GM18951 (cell line): ENCODE measurements at regions of chr14 and their contacts with region 1.

Region 1: DNA sequence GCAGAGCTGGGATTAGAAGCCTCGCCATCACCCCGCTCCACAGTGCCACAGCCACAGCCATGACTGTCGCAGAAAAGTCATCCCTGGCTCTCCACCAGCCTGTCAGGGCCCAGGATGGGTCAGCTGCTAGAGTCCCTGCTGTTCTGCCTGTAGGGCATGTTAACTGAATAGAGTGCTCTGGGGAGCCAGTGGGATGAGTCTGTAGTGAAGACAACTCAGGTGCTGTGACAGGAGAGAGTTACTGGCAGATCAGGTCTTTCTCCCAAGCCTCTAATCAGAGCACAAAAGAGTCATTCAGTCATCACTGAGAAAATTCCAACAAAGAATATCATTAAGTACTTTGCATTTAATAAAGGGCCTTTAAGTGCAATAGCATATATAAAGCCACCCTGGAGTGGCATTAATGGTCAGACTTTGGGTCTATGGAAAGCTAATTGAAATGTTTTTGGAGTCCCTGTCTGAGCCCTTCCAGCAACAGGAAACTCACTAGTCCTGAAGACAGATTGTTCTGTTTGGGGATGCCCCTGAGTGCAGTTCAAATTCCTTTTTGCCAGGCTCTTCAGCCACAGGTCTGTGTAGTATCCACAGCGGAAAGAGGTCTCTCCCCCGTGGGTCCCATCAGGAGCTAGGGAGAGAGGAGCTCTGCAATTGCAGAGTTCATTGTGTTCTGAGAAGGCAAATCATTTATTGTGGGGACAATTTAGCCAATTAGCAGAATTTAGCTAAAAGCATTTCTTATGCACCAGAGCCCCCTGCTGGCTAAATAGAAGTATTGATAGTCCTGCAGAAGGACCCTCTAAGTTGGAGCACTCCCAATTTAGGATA is 45.2 kb upstream of the C14orf132 start:
- POLR2A ChIP-seq: no peak

Region 2: DNA sequence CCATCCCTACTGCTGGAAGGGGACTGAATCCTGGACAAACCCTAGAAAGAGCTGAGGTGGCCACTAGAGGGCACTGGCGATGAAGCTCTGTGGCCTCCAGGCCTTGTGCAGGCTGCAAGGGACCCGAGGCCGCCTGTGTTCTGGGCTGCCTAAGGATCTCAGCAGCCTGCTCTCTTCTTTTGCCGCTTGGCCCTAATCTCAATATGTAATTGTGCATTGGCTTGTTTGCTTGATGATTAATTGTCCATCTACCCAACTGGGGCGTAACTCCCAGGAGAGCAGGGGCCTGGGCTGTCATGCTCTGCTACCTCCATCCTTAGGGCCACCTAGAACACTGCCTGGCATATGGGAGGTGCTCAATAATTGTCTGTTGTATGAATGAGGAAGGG is 551.4 kb before region 1 on chr14:
- in situ Hi-C with region 1: loop called (anchors 25 kb)
- POLR2A ChIP-seq: no peak

Region 3: GRCh38 chr14:95561001-95561412 is 433.0 kb before region 1 on chr14:
- in situ Hi-C with region 1: loop called (anchors 10 kb)
- POLR2A ChIP-seq: no peak